PC-3 (cell line): ENCODE measurements at regions of chr3 and their contacts with region 1.

Region 1: GRCh38 chr3:196568246-196569002 is at the starts of genes FBXO45 and WDR53:
- DNase-seq: peak; percentile 97
- ATAC-seq: peak; percentile 87
- H3K4me3 ChIP-seq: peak within 1 kb of the TSS; percentile 97
- H3K27ac ChIP-seq: peak within 1 kb of the TSS; percentile 42
- H3K4me1 ChIP-seq: peaks cover 31% of the 10 kb centered on the region
- H3K27me3 ChIP-seq: no peaks in the 10 kb centered on the region
- CTCF ChIP-seq: no peak
- total RNA-seq, gene FBXO45: 20.8 and 22.3 TPM in 2 replicates
- total RNA-seq, gene WDR53: 11.7 and 17.4 TPM in 2 replicates

Region 2: GRCh38 chr3:196292291-196292923 is 276.0 kb before region 1 on chr3:
- CTCF ChIA-PET with region 1: no interaction called
- POLR2A ChIA-PET with region 1: no interaction called
- intact Hi-C with region 1: no loop called
- DNase-seq: no peak
- ATAC-seq: no peak
- H3K4me3 ChIP-seq: no peak overlapping the region
- H3K27ac ChIP-seq: no peak overlapping the region
- H3K4me1 ChIP-seq: no peaks in the 10 kb centered on the region
- H3K27me3 ChIP-seq: no peaks in the 10 kb centered on the region
- CTCF ChIP-seq: 0 out of 2 replicates have a peak, but pooled peaks have one; percentile 18

Region 3: GRCh38 chr3:196423044-196423781 is 145.2 kb before region 1 on chr3:
- CTCF ChIA-PET with region 1: no interaction called
- POLR2A ChIA-PET with region 1: interaction called, 22 read pairs
- intact Hi-C with region 1: no loop called
- DNase-seq: no peak
- ATAC-seq: no peak
- H3K4me3 ChIP-seq: no peak overlapping the region
- H3K27ac ChIP-seq: no peak overlapping the region
- H3K4me1 ChIP-seq: no peaks in the 10 kb centered on the region
- H3K27me3 ChIP-seq: no peaks in the 10 kb centered on the region
- CTCF ChIP-seq: no peak

Region 4: DNA sequence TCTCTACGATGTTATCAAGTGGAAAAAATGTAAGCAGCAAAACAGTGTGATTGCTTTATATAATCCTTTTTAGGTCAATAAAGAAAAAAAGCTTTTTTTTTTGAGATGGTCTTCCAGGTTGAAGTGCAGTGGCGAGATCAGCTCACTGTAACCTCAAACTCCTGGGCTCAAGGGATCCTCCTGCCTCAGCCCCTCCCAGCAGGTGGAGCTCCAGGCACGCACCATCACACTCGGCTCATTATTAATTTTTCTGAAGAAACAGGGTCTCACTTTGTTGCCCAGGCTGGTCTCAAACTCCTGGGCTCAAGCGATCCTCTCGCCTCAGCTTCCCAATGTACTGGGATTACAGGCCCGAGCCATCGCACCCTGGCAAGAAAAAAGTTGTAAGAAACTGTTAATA is 82.2 kb before region 1 on chr3:
- CTCF ChIA-PET with region 1: interaction called, 3 read pairs
- POLR2A ChIA-PET with region 1: no interaction called
- intact Hi-C with region 1: loop called (anchors 5 kb)
- DNase-seq: peak; percentile 28
- ATAC-seq: no peak
- H3K4me3 ChIP-seq: no peak overlapping the region
- H3K27ac ChIP-seq: no peak overlapping the region
- H3K4me1 ChIP-seq: no peaks in the 10 kb centered on the region
- H3K27me3 ChIP-seq: no peaks in the 10 kb centered on the region
- CTCF ChIP-seq: peak; percentile 67

Region 5: GRCh38 chr3:196502775-196503195 is 65.6 kb before region 1 on chr3:
- CTCF ChIA-PET with region 1: no interaction called
- POLR2A ChIA-PET with region 1: no interaction called
- intact Hi-C with region 1: loop called (anchors 2 kb)
- DNase-seq: peak; percentile 94
- ATAC-seq: peak; percentile 50
- H3K4me3 ChIP-seq: peak overlapping the region; percentile 82
- H3K27ac ChIP-seq: peak overlapping the region; percentile 80
- H3K4me1 ChIP-seq: peaks cover 19% of the 10 kb centered on the region
- H3K27me3 ChIP-seq: no peaks in the 10 kb centered on the region
- CTCF ChIP-seq: no peak

Region 6: GRCh38 chr3:196585044-196585757 is 16.8 kb after region 1 on chr3:
- CTCF ChIA-PET with region 1: interaction called, 23 read pairs
- POLR2A ChIA-PET with region 1: no interaction called
- intact Hi-C with region 1: no loop called
- DNase-seq: no peak
- ATAC-seq: no peak
- H3K4me3 ChIP-seq: no peak overlapping the region
- H3K27ac ChIP-seq: no peak overlapping the region
- H3K4me1 ChIP-seq: no peaks in the 10 kb centered on the region
- H3K27me3 ChIP-seq: no peaks in the 10 kb centered on the region
- CTCF ChIP-seq: no peak